ENCODE measurements at regions of chr18 and their contacts with region 1.

Region 1: GRCh38 chr18:2948038-2948437 is 64.9 kb downstream of the LPIN2 start:
- ATAC-seq: peak in 3 of 8 experiments; percentile 27 to 82 (median 28)
- H3K4me3 ChIP-seq: no peak overlapping the region
- H3K27ac ChIP-seq: no peak overlapping the region
- H3K4me1 ChIP-seq: no peaks in the 10 kb centered on the region

Region 2: GRCh38 chr18:3081584-3081991 is 133.6 kb after region 1 on chr18:
- in situ Hi-C with region 1: no loop called
- ATAC-seq: peak in 1 of 8 experiments; percentile 31
- H3K4me3 ChIP-seq: no peak overlapping the region
- H3K27ac ChIP-seq: no peak overlapping the region
- H3K4me1 ChIP-seq: peaks cover 0 to 5% of the 10 kb centered on the region in 2 donors

Region 3: GRCh38 chr18:3245853-3246634 is 298.0 kb after region 1 on chr18:
- in situ Hi-C with region 1: loop called in 6 of 9 experiments (anchors 10 to 25 kb)
- ATAC-seq: peak; percentile 34 to 64 (median 47)
- H3K4me3 ChIP-seq: peak overlapping the region in 1 of 5 donors; percentile 6
- H3K27ac ChIP-seq: no peak overlapping the region
- H3K4me1 ChIP-seq: peaks cover 2 to 6% of the 10 kb centered on the region in 2 donors